Breast epithelium (tissue), 4 donors: ENCODE measurements at regions of chr13 and their contacts with region 1.

Region 1: GRCh38 chr13:85461621-85462020 is 337.6 kb downstream of the SLITRK6 start:
- DNase-seq: no peak
- H3K4me3 ChIP-seq: no peak overlapping the region
- H3K27ac ChIP-seq: no peak overlapping the region
- H3K4me1 ChIP-seq: no peaks in the 10 kb centered on the region
- H3K27me3 ChIP-seq: no peaks in the 10 kb centered on the region
- CTCF ChIP-seq: no peak
- POLR2A ChIP-seq: no peak

Region 2: GRCh38 chr13:85473144-85473543 is 11.5 kb after region 1 on chr13:
- intact Hi-C with region 1: loop called (anchors 1 kb)
- DNase-seq: no peak
- H3K4me3 ChIP-seq: no peak overlapping the region
- H3K27ac ChIP-seq: no peak overlapping the region
- H3K4me1 ChIP-seq: no peaks in the 10 kb centered on the region
- H3K27me3 ChIP-seq: no peaks in the 10 kb centered on the region
- CTCF ChIP-seq: no peak
- POLR2A ChIP-seq: no peak

Region 3: DNA sequence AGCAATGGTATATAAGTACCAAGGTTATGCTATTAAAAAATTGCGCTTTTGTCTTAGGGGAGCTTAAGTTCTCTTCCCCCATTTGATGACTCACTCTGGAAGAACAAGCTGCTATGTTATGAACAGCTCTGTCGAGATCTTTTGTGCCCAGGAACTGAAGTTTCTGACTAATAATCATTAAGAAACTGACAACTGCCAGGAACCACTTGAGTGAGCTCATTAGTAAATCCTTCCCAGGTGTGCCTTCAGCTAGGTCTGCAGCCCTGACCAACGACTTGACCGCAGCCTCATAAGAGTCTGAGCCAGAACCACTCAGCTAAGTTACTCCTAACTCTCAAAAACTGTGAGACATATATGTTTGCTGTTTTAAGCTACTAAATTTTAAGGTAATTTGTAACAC is 189.8 kb after region 1 on chr13:
- intact Hi-C with region 1: no loop called
- DNase-seq: no peak
- H3K4me3 ChIP-seq: no peak overlapping the region
- H3K27ac ChIP-seq: no peak overlapping the region
- H3K4me1 ChIP-seq: no peaks in the 10 kb centered on the region
- H3K27me3 ChIP-seq: no peaks in the 10 kb centered on the region
- CTCF ChIP-seq: no peak
- POLR2A ChIP-seq: no peak